CD8-positive, alpha-beta T cell (primary cell): ENCODE measurements at regions of chr1 and their contacts with region 1.

Region 1: GRCh38 chr1:214660862-214661261 is 57.9 kb downstream of the CENPF start:
- DNase-seq: no peak
- ATAC-seq: no peak
- H3K4me3 ChIP-seq: no peak overlapping the region
- H3K4me3 Mint-ChIP-seq: no peak overlapping the region
- H3K27ac ChIP-seq: no peak overlapping the region
- H3K27ac Mint-ChIP-seq: no peak overlapping the region
- H3K4me1 ChIP-seq: no peaks in the 10 kb centered on the region
- H3K4me1 Mint-ChIP-seq: peaks cover 2% of the 10 kb centered on the region
- H3K27me3 ChIP-seq: no peaks in the 10 kb centered on the region
- H3K27me3 Mint-ChIP-seq: no peaks in the 10 kb centered on the region
- CTCF ChIP-seq: no peak

Region 2: DNA sequence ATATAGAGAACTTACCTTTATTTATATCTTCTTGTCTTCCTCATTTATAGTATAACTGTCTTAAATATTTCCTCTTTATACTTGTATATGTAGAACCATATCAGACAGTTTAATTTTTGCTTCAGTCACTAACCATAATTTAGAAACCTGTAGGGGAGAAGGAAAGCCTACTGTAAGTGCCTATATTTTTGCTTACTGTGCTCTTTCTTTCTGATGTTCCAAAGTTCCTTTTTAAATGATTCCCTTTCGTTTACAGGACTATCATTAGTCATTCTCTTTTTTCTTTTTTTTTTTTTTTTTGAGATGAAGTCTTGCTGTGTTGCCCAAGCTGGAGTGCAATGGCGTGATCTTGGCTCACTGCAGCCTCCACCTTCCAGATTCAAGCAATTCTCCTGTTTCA is 51.9 kb after region 1 on chr1:
- CTCF ChIA-PET with region 1: no interaction called
- POLR2A ChIA-PET with region 1: no interaction called
- intact Hi-C with region 1: loop called in 1 of 2 experiments (anchors 5 kb)
- DNase-seq: no peak
- ATAC-seq: no peak
- H3K4me3 ChIP-seq: no peak overlapping the region
- H3K4me3 Mint-ChIP-seq: no peak overlapping the region
- H3K27ac ChIP-seq: no peak overlapping the region
- H3K27ac Mint-ChIP-seq: no peak overlapping the region
- H3K4me1 ChIP-seq: no peaks in the 10 kb centered on the region
- H3K4me1 Mint-ChIP-seq: no peaks in the 10 kb centered on the region
- H3K27me3 ChIP-seq: no peaks in the 10 kb centered on the region
- H3K27me3 Mint-ChIP-seq: peaks cover 8% of the 10 kb centered on the region
- CTCF ChIP-seq: no peak